ENCODE measurements at regions of chr16 and their contacts with region 1.

Region 1: DNA sequence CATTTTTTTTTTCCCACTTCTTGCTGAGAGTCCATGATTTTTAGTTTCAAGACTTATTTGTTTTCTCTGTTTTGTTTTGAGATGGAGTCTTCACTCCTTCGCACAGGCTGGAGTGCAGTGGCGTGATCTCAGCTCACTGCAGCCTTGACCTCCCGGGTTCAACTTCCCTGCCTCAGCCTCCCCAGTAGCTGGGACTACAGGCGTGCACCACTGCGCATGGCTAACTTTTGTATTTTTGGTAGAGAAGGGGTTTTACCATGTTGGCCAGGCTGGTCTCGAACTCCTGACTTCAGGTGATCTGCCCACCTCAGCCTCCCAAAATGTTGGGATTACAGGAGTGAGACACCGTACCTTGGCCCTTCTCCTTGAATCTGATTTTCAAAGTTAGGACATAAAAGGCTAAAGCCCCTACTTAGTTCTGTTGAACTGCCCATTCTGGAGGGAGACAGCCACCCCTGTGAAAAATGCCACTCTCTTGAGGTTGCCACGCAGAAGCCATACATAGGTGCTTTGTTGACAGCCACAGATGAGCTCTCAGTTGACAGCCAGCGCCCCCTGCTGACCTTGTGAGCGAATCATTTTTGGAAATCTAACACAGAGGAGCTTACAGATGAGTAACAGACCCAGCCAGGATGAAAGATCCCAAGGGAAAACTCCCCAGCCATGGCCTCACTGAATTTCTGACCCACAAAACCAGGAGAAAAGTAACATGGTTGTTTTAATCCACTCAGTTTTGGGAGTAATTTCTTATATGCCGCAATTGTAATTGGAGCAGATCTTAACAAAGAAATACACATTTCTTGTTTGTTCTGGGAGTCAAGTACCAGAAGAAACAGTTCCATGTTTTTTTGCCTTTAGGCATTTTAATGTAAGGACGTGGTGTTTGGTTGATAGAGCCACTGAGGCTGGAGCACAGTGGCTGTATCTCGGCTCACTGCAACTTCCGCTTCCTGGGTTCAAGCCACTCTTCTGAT is 38.8 kb downstream of the PKD1L3 start:
- DNase-seq: peak; percentile 80 to 96 (median 88)
- H3K4me3 ChIP-seq: no peak overlapping the region
- H3K27ac ChIP-seq: no peak overlapping the region
- H3K4me1 ChIP-seq: no peaks in the 10 kb centered on the region
- H3K27me3 ChIP-seq: no peaks in the 10 kb centered on the region
- CTCF ChIP-seq: peak; percentile 70 to 84 (median 80)
- POLR2A ChIP-seq: no peak

Region 2: GRCh38 chr16:71878911-71879310 is 82.4 kb before region 1 on chr16:
- intact Hi-C with region 1: loop called (anchors 5 to 10 kb)
- DNase-seq: peak in 1 of 7 donors; percentile 1
- H3K4me3 ChIP-seq: no peak overlapping the region
- H3K27ac ChIP-seq: no peak overlapping the region
- H3K4me1 ChIP-seq: peaks cover 3 to 14% of the 10 kb centered on the region in 2 donors
- H3K27me3 ChIP-seq: no peaks in the 10 kb centered on the region
- CTCF ChIP-seq: no peak
- POLR2A ChIP-seq: no peak

Region 3: GRCh38 chr16:71883849-71884638 is 77.3 kb before region 1 on chr16 and contains the start of gene ZNF821:
- intact Hi-C with region 1: loop called (anchors 5 to 10 kb)
- DNase-seq: peak; percentile 61 to 81 (median 73)
- H3K4me3 ChIP-seq: peak within 1 kb of the TSS; percentile 74 to 77 (median 75)
- H3K27ac ChIP-seq: peak within 1 kb of the TSS; percentile 52 to 91 (median 78)
- H3K4me1 ChIP-seq: peaks cover 3 to 14% of the 10 kb centered on the region in 2 donors
- H3K27me3 ChIP-seq: no peaks in the 10 kb centered on the region
- CTCF ChIP-seq: peak in 5 of 6 experiments; percentile 31 to 58 (median 34)
- POLR2A ChIP-seq: peak in 1 of 2 donors; percentile 19
- total RNA-seq, gene ZNF821: 5.9 to 9.4 (median 6.7) TPM

Measured in adrenal gland (tissue), 19 donors.